ENCODE measurements at regions of chr7 and their contacts with region 1.

Region 1: GRCh38 chr7:93228302-93228701 is 2.0 kb upstream of the HEPACAM2 start:
- DNase-seq: peak; percentile 46
- ATAC-seq: no peak
- H3K4me3 ChIP-seq: no peak overlapping the region
- H3K27ac ChIP-seq: no peak overlapping the region
- H3K4me1 ChIP-seq: peaks cover 11% of the 10 kb centered on the region
- H3K27me3 ChIP-seq: peaks cover 11% of the 10 kb centered on the region
- CTCF ChIP-seq: peak; percentile 77; the same call in 1 of the 2 replicates

Region 2: DNA sequence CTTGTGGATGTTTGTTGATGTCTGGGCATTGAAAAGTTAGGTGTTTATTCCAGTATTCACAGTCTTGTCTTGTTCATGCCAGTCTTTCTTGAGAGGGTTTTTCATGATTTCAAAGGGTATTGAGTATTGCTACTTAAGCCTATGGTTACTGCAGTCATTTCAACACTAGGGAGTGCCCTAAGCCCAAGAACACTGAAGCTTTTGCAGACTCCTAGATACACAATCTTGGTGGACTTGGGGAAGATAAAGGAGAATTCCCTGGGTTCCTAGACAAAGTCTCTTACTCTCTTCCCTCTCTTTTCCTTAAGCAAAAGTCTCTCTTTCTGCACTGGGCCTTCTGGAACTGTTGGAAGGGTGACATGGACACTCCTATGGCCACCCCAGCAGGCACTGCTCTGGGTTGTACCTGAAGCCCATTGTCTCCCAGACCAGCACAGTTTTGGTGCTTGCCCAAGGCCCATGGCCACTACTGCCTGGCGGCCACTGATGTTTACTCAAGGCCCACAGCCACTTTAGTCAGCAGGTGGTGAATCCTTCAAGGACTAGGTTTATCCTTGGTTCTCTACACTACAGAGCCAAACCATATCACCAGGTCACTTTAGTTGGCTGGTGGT is 135.4 kb before region 1 on chr7:
- CTCF ChIA-PET with region 1: no interaction called
- POLR2A ChIA-PET with region 1: no interaction called
- in situ Hi-C with region 1: no loop called
- intact Hi-C with region 1: loop called (anchors 2 kb)
- DNase-seq: peak; percentile 25
- ATAC-seq: peak; percentile 84
- H3K4me3 ChIP-seq: no peak overlapping the region
- H3K27ac ChIP-seq: no peak overlapping the region
- H3K4me1 ChIP-seq: no peaks in the 10 kb centered on the region
- H3K27me3 ChIP-seq: peaks cover 3% of the 10 kb centered on the region; the same call in 1 of the 2 replicates
- CTCF ChIP-seq: peak; percentile 35; the same call in 1 of the 2 replicates

Region 3: GRCh38 chr7:93178212-93178611 is 50.1 kb before region 1 on chr7:
- CTCF ChIA-PET with region 1: no interaction called
- POLR2A ChIA-PET with region 1: no interaction called
- in situ Hi-C with region 1: no loop called
- intact Hi-C with region 1: loop called (anchors 5 kb)
- DNase-seq: no peak
- ATAC-seq: no peak
- H3K4me3 ChIP-seq: no peak overlapping the region
- H3K27ac ChIP-seq: no peak overlapping the region
- H3K4me1 ChIP-seq: no peaks in the 10 kb centered on the region
- H3K27me3 ChIP-seq: peaks cover 6% of the 10 kb centered on the region
- CTCF ChIP-seq: peak; percentile 27; the same call in 1 of the 2 replicates

Region 4: DNA sequence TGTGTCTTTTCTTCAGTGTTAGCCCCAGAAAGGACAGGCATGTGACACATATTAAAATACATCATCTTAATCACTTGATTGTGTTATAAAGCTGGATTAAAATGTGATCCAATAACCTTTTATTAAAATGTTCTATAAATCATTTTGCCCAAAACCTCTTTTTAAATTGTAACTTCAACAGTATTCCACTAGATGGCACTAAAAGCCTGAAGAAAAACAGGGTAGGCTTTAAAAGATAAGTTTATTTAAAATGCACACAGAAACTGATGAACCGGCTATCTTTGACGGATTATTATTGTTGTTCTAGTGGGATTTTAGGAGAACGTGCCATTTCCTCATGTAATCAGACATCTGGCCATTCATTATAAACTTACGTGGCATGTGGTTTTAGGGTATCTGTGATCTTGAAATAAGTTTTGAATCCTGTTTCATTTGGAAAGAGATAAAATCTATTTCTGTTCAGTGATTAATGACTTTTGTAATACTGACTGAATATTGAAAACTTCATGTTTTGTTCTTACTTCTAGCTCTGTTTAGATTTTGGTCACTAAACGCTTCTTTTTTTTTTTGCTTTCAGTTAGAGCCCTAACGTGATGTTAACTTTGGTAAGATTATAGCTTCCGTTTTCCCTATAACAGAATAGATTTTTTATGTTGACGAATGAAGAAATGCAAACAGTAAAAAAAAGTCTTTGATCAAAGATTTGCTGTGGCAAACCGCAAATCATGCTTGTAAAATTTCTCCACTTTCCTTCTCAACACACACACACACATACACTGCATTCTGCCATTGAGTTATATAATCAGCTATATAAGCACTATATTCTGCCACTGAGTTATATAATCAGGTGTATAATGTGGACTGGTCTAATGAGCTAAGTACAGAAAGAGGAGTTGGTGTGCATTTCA is 17.5 kb after region 1 on chr7:
- CTCF ChIA-PET with region 1: no interaction called
- POLR2A ChIA-PET with region 1: no interaction called
- in situ Hi-C with region 1: no loop called
- intact Hi-C with region 1: no loop called
- DNase-seq: no peak
- ATAC-seq: no peak
- H3K4me3 ChIP-seq: no peak overlapping the region
- H3K27ac ChIP-seq: no peak overlapping the region
- H3K4me1 ChIP-seq: no peaks in the 10 kb centered on the region
- H3K27me3 ChIP-seq: no peaks in the 10 kb centered on the region
- CTCF ChIP-seq: peak; percentile 61; the same call in 1 of the 2 replicates

Measured in Panc1 (cell line).